AG04449 (cell line): ENCODE measurements at regions of chr14 and their contacts with region 1.

Region 1: GRCh38 chr14:68520637-68521556 is 272.0 kb downstream of the ZFP36L1 start:
- DNase-seq: no peak
- H3K4me3 ChIP-seq: no peak overlapping the region
- CTCF ChIP-seq: no peak

Region 2: DNA sequence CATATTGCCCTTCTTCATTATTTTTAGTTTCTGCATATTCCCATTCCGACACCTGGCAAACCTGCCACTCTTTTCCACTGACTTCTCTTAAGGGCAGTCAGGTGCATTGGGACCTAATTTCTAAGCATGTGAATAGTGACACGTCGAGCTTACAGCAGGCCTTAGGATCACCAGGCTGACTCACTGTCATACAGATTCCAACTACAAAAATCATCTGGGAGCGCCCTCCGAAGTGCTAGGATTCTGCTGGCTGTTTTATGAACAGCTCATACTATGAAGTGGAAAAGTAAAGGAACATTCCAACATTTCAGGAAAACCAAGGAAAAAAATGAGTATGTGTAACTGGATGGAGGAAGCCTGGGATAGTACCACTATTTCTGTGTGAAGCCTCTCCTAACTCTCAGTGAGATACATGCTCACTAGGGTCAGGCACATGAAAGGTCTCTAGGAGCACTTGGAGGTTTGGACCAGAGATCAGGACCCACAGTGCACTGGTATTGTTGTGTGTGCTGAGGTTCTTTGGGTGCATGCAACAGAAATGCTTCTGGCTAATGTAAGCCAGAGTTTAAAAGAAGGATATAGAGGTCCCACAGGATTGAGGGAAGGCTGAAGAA is 14.6 kb after region 1 on chr14:
- CTCF ChIA-PET with region 1: interaction called, 13 read pairs
- POLR2A ChIA-PET with region 1: no interaction called
- DNase-seq: peak; percentile 73
- H3K4me3 ChIP-seq: no peak overlapping the region
- CTCF ChIP-seq: no peak

Region 3: GRCh38 chr14:68695326-68695768 is 174.4 kb after region 1 on chr14:
- CTCF ChIA-PET with region 1: no interaction called
- POLR2A ChIA-PET with region 1: no interaction called
- DNase-seq: peak; percentile 97
- H3K4me3 ChIP-seq: no peak overlapping the region
- CTCF ChIP-seq: no peak